Activated B cell treated with CpG ODN at 0.5 μM for 24 hours (primary cell): ENCODE measurements at regions of chr17 and their contacts with region 1.

Region 1: GRCh38 chr17:75571197-75571873 is 16.3 kb upstream of the MYO15B start:
- DNase-seq: peak; percentile 56
- ATAC-seq: peak; percentile 98
- H3K4me3 Mint-ChIP-seq: peak overlapping the region; percentile 64
- H3K27ac Mint-ChIP-seq: peak overlapping the region; percentile 92
- H3K4me1 Mint-ChIP-seq: peaks cover 22% of the 10 kb centered on the region
- H3K27me3 Mint-ChIP-seq: no peaks in the 10 kb centered on the region
- CTCF ChIP-seq: no peak

Region 2: GRCh38 chr17:75553295-75554110 is 17.8 kb before region 1 on chr17:
- CTCF ChIA-PET with region 1: no interaction called
- POLR2A ChIA-PET with region 1: interaction called, 10 read pairs
- intact Hi-C with region 1: no loop called
- DNase-seq: no peak
- ATAC-seq: no peak
- H3K4me3 Mint-ChIP-seq: no peak overlapping the region
- H3K27ac Mint-ChIP-seq: no peak overlapping the region
- H3K4me1 Mint-ChIP-seq: no peaks in the 10 kb centered on the region
- H3K27me3 Mint-ChIP-seq: no peaks in the 10 kb centered on the region
- CTCF ChIP-seq: no peak